CD8-positive, alpha-beta T cell (primary cell): ENCODE measurements at regions of chr20 and their contacts with region 1.

Region 1: DNA sequence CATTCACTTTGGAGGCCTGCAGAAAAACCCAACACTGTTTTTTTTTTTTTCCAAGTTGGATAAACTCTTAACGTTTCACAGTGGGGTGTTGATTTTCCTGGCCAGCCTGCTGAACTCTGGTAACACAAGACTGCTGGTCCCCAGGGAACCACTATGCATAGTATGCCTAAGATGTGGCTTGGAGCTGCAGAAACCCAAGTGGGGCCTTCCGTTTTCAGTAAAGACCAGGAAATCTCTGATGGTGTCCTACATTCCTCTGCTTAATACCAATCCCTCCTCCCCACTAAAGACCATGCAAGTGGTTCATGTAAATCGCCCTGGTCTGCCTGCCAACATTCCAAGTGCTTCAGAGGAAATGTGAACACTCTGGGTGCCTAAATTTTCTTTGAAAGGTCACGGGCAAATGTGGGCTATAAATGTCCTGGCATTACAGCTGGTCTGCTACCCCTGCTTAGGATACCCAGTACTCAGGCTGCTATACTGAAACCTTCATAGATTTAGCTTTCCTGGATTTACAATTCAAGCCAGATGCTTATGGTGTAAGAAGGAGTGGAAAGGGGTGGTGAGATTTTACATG is 615.4 kb downstream of the MAFB start:
- DNase-seq: no peak
- ATAC-seq: no peak
- H3K4me3 ChIP-seq: no peak overlapping the region
- H3K4me3 Mint-ChIP-seq: no peak overlapping the region
- H3K27ac ChIP-seq: no peak overlapping the region
- H3K27ac Mint-ChIP-seq: no peak overlapping the region
- H3K4me1 ChIP-seq: no peaks in the 10 kb centered on the region
- H3K4me1 Mint-ChIP-seq: no peaks in the 10 kb centered on the region
- H3K27me3 ChIP-seq: no peaks in the 10 kb centered on the region
- H3K27me3 Mint-ChIP-seq: no peaks in the 10 kb centered on the region
- CTCF ChIP-seq: no peak

Region 2: DNA sequence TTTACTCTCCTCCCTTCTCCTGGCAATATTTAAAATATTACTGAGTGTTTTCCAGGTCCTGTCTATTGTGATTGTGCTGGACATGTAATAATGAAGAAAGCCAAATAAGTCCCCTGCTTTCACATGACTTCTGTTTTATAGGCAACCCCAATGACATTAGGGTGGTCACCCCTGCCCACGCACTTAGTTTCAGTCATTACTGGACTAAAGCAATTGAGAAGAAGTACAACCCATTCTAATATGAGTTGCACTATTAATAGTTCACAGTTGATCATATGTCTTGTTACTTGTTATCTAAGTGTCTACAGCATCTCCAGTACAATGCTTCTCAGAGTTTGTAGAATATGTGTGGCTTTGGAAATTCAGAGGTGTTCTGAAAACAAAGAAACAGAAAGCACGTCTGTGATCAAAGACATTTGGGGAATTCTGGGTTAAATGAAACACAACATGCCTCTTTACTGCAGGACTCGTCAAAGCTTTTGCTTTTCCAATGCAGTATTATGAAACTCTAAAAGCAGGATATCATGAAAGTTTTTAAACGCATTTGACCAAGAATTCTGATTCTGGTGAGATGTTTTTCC is 322.0 kb before region 1 on chr20:
- CTCF ChIA-PET with region 1: no interaction called
- POLR2A ChIA-PET with region 1: no interaction called
- intact Hi-C with region 1: no loop called
- DNase-seq: no peak
- ATAC-seq: no peak
- H3K4me3 ChIP-seq: no peak overlapping the region
- H3K4me3 Mint-ChIP-seq: no peak overlapping the region
- H3K27ac ChIP-seq: no peak overlapping the region
- H3K27ac Mint-ChIP-seq: no peak overlapping the region
- H3K4me1 ChIP-seq: no peaks in the 10 kb centered on the region
- H3K4me1 Mint-ChIP-seq: no peaks in the 10 kb centered on the region
- H3K27me3 ChIP-seq: no peaks in the 10 kb centered on the region
- H3K27me3 Mint-ChIP-seq: no peaks in the 10 kb centered on the region
- CTCF ChIP-seq: no peak

Region 3: GRCh38 chr20:39993742-39994141 is 79.9 kb before region 1 on chr20:
- CTCF ChIA-PET with region 1: no interaction called
- POLR2A ChIA-PET with region 1: no interaction called
- intact Hi-C with region 1: loop called in 1 of 2 experiments (anchors 2 kb)
- DNase-seq: no peak
- ATAC-seq: no peak
- H3K4me3 ChIP-seq: no peak overlapping the region
- H3K4me3 Mint-ChIP-seq: no peak overlapping the region
- H3K27ac ChIP-seq: no peak overlapping the region
- H3K27ac Mint-ChIP-seq: no peak overlapping the region
- H3K4me1 ChIP-seq: no peaks in the 10 kb centered on the region
- H3K4me1 Mint-ChIP-seq: no peaks in the 10 kb centered on the region
- H3K27me3 ChIP-seq: no peaks in the 10 kb centered on the region
- H3K27me3 Mint-ChIP-seq: no peaks in the 10 kb centered on the region
- CTCF ChIP-seq: no peak